Sciatic nerve (tissue), 2 donors: ENCODE measurements at regions of chr22 and their contacts with region 1.

Region 1: DNA sequence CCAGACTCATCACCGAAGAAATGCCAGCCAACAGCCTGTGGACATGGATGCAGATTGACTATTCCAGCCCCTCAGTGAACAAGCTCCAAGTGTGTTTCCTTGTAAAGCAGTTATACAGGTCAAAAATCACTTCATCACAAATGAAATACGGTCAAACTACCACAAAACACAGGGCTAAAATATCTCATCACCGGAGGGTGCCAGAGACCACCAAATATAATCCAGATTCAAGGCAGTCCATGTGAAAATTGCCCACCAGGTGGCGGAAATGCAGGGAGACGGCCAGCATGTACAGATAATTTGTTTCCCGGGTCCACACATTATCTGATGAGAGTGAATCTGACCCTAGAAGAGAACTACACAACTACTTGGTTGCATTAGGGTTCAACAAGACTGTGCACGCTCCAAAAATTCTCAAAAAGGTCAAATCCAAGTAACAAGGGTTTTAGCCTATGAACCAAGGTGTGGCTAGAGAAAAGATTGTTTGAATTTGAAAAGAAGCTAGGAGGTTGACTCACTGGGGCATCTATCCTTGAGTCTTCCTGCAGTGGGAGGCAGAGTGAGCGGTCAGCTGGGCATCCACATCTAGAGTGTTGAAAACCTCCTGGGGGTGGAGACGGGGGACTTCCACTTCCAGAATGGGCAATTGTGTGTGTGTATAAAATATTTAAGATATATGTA is 71.7 kb downstream of the IGLL5 start:
- DNase-seq: peak; percentile 92
- ATAC-seq: peak; percentile 88

Region 2: DNA sequence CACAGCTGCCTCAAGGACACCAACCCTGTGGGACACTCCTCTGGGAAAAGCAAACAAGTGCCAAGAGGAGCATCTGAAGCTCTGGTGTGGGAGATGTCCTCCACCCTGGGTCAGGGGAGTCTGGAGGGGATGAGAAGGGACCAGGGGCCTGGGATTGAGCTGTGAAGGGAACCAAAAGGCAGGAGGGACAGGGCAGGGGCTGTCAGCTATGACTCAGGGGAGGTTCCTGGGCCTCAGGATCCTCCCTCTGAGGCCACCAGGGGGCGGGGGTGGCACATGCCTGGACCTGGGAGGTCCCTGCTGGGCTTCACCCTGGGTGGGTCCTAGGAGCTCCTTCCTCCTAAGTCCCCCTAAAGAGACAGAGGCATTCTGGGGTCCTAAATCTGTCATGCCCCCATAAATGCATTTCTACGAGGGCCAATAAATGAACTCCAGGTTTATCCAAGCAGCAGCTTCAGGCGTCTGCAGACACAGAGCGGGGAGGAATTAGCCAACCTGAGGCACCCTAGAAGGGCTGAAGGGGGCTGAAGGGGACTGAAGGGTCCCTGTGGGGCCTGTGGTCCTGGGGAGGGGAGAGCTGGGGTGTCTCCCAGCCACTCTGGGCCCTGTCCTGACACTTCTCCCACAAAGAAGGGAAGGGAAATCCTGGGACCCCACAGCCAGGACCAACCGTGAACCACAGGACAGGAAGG is 103.5 kb before region 1 on chr22:
- intact Hi-C with region 1: loop called (anchors 10 kb)
- DNase-seq: no peak
- ATAC-seq: peak; percentile 36

Region 3: GRCh38 chr22:23128269-23129108 is 169.2 kb after region 1 on chr22:
- intact Hi-C with region 1: loop called (anchors 5 kb)
- DNase-seq: peak; percentile 91
- ATAC-seq: peak; percentile 93